ENCODE measurements at regions of chr17 and their contacts with region 1.

Region 1: GRCh38 chr17:39621523-39622379 is 5.0 kb upstream of the PPP1R1B start:
- DNase-seq: peak; percentile 78 to 96 (median 87)
- ATAC-seq: peak; percentile 79
- H3K4me3 ChIP-seq: peak overlapping the region in 1 of 2 experiments; percentile 27
- H3K4me3 Mint-ChIP-seq: peak overlapping the region; percentile 77
- H3K27ac ChIP-seq: peak overlapping the region in 1 of 2 experiments; percentile 17
- H3K27ac Mint-ChIP-seq: peak overlapping the region; percentile 87
- H3K4me1 ChIP-seq: peaks cover 36% of the 10 kb centered on the region
- H3K4me1 Mint-ChIP-seq: peaks cover 23% of the 10 kb centered on the region
- H3K27me3 ChIP-seq: peaks cover 8 to 10% of the 10 kb centered on the region in 2 experiments
- H3K27me3 Mint-ChIP-seq: peaks cover 14% of the 10 kb centered on the region
- CTCF ChIP-seq: peak; percentile 100

Region 2: DNA sequence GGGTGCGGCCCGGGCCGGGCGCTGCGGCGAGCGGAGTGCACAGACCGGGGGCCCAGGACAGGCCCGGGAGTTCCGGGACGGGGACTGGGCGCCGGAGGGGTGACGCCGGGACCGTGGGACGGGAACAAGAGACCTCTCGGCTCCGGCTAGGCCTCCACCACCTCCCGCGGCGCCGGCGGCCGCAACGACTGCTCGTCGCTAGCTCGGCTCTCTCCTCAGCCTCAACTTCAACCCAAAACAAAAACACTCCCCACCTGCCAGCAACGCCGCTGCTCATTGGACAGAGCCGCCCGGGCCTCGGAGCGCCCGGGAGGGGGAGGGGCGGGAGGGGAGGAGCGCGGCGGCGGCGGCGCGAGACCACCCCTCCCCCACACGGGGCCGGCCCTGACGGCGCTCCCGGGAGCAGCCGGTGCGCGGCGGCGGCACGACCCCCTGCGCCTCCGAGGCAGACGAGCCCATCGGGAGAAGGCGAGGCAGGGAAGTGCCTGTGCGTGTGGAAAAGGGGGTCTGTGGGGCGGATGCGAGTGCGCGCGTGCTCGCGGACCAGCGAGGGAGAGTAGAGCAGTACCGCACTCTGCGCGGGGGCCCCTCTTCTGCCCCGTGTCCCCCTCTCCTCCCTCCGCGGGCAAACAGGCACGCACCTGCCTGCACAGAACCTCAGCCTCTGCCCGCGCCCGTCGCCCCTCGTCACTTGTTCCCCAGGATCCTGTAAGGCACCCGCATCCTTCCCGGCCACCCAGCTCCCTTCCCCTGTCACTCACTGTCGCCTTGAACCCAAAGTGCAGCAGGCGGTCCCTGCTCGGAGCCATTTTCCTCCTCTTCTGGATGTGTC is 220.1 kb before region 1 on chr17 and contains the start of gene FBXL20:
- CTCF ChIA-PET with region 1: no interaction called
- POLR2A ChIA-PET with region 1: no interaction called
- intact Hi-C with region 1: loop called in 1 of 2 experiments (anchors 5 kb)
- DNase-seq: peak; percentile 90 to 96 (median 94)
- ATAC-seq: peak; percentile 78
- H3K4me3 ChIP-seq: peak within 1 kb of the TSS; percentile 89 to 96
- H3K4me3 Mint-ChIP-seq: peak within 1 kb of the TSS; percentile 98
- H3K27ac ChIP-seq: peak within 1 kb of the TSS; percentile 78 to 82
- H3K27ac Mint-ChIP-seq: peak within 1 kb of the TSS; percentile 97
- H3K4me1 ChIP-seq: peaks cover 14% of the 10 kb centered on the region
- H3K4me1 Mint-ChIP-seq: peaks cover 39% of the 10 kb centered on the region
- H3K27me3 ChIP-seq: no peaks in the 10 kb centered on the region
- H3K27me3 Mint-ChIP-seq: no peaks in the 10 kb centered on the region
- CTCF ChIP-seq: no peak
- total RNA-seq, gene FBXL20: 12.1 to 14.0 TPM

Region 3: DNA sequence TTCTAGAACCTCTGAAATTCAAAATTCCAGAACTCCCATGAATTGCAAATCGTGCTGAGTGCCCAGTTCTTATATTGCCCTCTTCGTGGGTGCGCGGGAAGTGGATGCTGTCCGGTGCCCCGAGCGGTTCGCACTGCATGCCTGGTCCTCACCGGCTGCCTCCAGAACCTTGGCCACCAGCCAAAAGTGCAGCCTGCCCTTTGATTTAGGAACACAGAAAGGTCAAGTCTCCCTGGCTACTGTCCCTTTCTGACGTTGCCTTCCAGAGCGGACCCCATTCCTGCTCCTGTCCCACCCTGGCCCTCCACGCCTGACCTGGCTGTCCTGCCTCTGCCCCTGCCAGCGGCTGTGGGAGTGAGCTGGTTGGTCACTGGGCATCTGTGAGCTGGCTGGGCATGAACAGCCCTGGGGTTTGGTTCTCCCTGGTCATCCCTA is 23.7 kb before region 1 on chr17:
- CTCF ChIA-PET with region 1: interaction called, 36 read pairs
- POLR2A ChIA-PET with region 1: no interaction called
- intact Hi-C with region 1: no loop called
- DNase-seq: peak in 1 of 9 experiments; percentile 2
- ATAC-seq: no peak
- H3K4me3 ChIP-seq: no peak overlapping the region
- H3K4me3 Mint-ChIP-seq: no peak overlapping the region
- H3K27ac ChIP-seq: no peak overlapping the region
- H3K27ac Mint-ChIP-seq: no peak overlapping the region
- H3K4me1 ChIP-seq: peaks cover 26% of the 10 kb centered on the region
- H3K4me1 Mint-ChIP-seq: peaks cover 22% of the 10 kb centered on the region
- H3K27me3 ChIP-seq: peaks cover 51 to 52% of the 10 kb centered on the region in 2 experiments
- H3K27me3 Mint-ChIP-seq: peaks cover 82% of the 10 kb centered on the region
- CTCF ChIP-seq: no peak

Region 4: DNA sequence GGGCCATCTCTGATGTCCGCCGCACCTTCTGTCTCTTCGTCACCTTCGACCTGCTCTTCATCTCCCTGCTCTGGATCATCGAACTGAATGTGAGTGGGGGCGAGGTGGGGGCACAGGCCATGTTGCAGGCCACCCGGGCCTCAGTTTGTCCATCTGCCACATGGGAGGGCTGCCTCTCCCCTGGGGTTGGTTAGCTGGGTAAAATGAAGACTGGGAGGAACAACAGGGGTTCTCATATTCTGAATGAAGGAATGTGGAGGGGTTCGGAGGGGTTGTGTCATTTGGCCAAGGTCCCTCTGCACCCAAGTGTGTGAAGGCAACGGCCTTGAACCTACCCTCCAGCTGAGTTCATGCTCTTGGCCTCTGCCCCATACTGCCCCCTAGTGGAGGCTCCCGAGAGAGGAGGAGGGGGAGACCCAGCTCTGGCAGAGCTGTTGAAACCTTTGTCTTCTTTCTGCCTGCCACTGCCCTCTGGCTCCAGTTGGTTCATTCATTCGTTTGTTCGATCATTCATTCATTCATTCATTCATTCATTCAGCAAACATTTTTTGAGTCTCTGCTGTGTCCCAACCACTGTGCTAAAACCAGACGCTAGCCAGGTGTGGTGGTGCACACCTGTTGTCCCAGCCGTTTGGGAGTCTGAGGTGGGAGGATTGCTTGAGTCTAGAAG is 32.0 kb after region 1 on chr17:
- CTCF ChIA-PET with region 1: interaction called, 143 read pairs
- POLR2A ChIA-PET with region 1: no interaction called
- intact Hi-C with region 1: loop called (anchors 1 kb)
- DNase-seq: peak; percentile 64 to 88 (median 81)
- ATAC-seq: peak; percentile 82
- H3K4me3 ChIP-seq: no peak overlapping the region
- H3K4me3 Mint-ChIP-seq: no peak overlapping the region
- H3K27ac ChIP-seq: no peak overlapping the region
- H3K27ac Mint-ChIP-seq: no peak overlapping the region
- H3K4me1 ChIP-seq: peaks cover 41% of the 10 kb centered on the region
- H3K4me1 Mint-ChIP-seq: peaks cover 60% of the 10 kb centered on the region
- H3K27me3 ChIP-seq: no peaks in the 10 kb centered on the region
- H3K27me3 Mint-ChIP-seq: no peaks in the 10 kb centered on the region
- CTCF ChIP-seq: peak; percentile 83

Region 5: DNA sequence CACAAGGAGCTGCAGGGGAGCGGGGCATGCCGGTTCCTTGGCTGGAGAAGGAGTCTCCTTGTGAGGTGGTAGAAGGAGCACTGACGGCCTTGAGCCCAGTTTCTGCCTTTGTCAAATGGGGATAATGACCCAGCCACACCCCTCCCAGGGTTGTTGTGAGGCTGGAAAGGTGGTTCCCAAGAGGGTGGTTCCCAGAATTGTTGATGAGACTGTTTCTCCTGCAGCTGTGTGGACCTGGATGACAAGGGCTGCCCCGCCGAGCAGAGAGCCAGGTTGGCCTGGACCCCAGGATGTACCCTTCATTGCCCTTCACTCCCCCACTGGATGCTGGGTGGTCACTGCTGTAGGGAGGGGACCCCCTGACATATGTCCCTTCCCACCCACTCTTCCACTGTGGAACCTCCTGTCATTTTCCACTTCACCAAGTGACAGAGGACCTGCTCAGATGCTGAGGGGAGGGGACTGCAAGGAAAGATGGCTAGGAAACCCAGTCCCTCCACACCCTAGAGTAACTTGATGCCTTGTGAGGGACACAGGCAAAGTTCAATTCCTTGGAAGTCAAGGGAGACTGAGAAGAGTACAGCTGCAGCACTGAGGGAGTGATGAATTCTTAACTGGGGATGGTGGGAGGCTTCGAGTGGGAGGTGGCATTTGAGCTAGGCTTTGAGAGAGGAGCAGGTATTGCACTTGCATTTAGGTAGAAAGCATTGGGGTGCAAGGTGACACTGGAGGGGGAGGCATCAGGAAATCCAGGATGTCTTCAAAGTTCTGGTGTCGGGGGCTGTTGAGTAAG is 98.0 kb after region 1 on chr17:
- CTCF ChIA-PET with region 1: interaction called, 10 read pairs
- POLR2A ChIA-PET with region 1: no interaction called
- intact Hi-C with region 1: no loop called
- DNase-seq: no peak
- ATAC-seq: no peak
- H3K4me3 ChIP-seq: no peak overlapping the region
- H3K4me3 Mint-ChIP-seq: no peak overlapping the region
- H3K27ac ChIP-seq: no peak overlapping the region
- H3K27ac Mint-ChIP-seq: no peak overlapping the region
- H3K4me1 ChIP-seq: no peaks in the 10 kb centered on the region
- H3K4me1 Mint-ChIP-seq: no peaks in the 10 kb centered on the region
- H3K27me3 ChIP-seq: no peaks in the 10 kb centered on the region
- H3K27me3 Mint-ChIP-seq: no peaks in the 10 kb centered on the region
- CTCF ChIP-seq: no peak

Region 6: GRCh38 chr17:39777534-39778365 is 156.0 kb after region 1 on chr17:
- CTCF ChIA-PET with region 1: interaction called, 11 read pairs
- POLR2A ChIA-PET with region 1: interaction called, 4 read pairs
- intact Hi-C with region 1: no loop called
- DNase-seq: peak in 2 of 9 experiments; percentile 54 to 71
- ATAC-seq: peak; percentile 46
- H3K4me3 ChIP-seq: peak overlapping the region; percentile 50 to 64
- H3K4me3 Mint-ChIP-seq: peak overlapping the region; percentile 89
- H3K27ac ChIP-seq: peak overlapping the region; percentile 52 to 84
- H3K27ac Mint-ChIP-seq: peak overlapping the region; percentile 97
- H3K4me1 ChIP-seq: peaks cover 87% of the 10 kb centered on the region
- H3K4me1 Mint-ChIP-seq: peaks cover 85% of the 10 kb centered on the region
- H3K27me3 ChIP-seq: no peaks in the 10 kb centered on the region
- H3K27me3 Mint-ChIP-seq: no peaks in the 10 kb centered on the region
- CTCF ChIP-seq: no peak

Region 7: DNA sequence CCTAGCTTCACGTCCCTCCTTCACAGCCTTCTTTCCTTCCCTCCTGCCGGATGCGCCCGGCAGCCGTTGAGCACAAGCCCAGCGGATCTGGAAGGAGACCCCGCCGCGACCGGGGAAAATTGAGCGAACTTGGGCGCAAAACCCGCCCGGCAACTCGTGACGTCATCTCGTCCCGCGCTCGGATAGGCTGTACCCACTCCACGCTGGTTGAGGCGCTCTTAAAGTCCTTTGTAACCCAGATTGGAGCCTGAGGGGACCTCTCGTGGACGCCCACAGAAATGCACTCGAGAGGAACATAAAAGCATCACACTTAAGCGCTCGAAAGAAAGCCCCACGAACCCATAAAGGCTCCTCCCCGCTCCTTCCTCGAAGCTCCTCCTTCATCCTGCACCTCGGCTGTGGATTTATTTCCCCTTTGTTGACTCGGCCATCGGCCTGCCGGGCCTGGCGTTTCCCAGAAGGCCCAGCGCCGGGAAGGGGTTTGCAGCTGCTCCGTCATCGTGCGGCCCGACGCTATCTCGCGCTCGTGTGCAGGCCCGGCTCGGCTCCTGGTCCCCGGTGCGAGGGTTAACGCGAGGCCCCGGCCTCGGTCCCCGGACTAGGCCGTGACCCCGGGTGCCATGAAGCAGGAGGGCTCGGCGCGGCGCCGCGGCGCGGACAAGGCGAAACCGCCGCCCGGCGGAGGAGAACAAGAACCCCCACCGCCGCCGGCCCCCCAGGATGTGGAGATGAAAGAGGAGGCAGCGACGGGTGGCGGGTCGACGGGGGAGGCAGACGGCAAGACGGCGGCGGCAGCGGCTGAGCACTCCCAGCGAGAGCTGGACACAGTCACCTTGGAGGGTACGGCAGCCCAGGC is 358.8 kb after region 1 on chr17 and contains the start of gene PSMD3:
- CTCF ChIA-PET with region 1: interaction called, 13 read pairs
- POLR2A ChIA-PET with region 1: no interaction called
- intact Hi-C with region 1: loop called (anchors 1 kb)
- DNase-seq: peak; percentile 95 to 100 (median 97)
- ATAC-seq: peak; percentile 94
- H3K4me3 ChIP-seq: peak within 1 kb of the TSS; percentile 67 to 83
- H3K4me3 Mint-ChIP-seq: peak within 1 kb of the TSS; percentile 93
- H3K27ac ChIP-seq: peak within 1 kb of the TSS; percentile 90 to 91
- H3K27ac Mint-ChIP-seq: peak within 1 kb of the TSS; percentile 97
- H3K4me1 ChIP-seq: peaks cover 25% of the 10 kb centered on the region
- H3K4me1 Mint-ChIP-seq: peaks cover 33% of the 10 kb centered on the region
- H3K27me3 ChIP-seq: peaks cover 0 to 3% of the 10 kb centered on the region in 2 experiments
- H3K27me3 Mint-ChIP-seq: no peaks in the 10 kb centered on the region
- CTCF ChIP-seq: peak; percentile 67
- total RNA-seq, gene PSMD3: 66.9 to 68.8 TPM

Region 8: GRCh38 chr17:40139566-40140058 is 517.9 kb after region 1 on chr17:
- CTCF ChIA-PET with region 1: no interaction called
- POLR2A ChIA-PET with region 1: no interaction called
- intact Hi-C with region 1: no loop called
- DNase-seq: peak in 2 of 9 experiments; percentile 3 to 24
- ATAC-seq: peak; percentile 24
- H3K4me3 ChIP-seq: peak overlapping the region; percentile 57 to 71
- H3K4me3 Mint-ChIP-seq: peak overlapping the region; percentile 89
- H3K27ac ChIP-seq: peak overlapping the region; percentile 93 to 94
- H3K27ac Mint-ChIP-seq: peak overlapping the region; percentile 99
- H3K4me1 ChIP-seq: peaks cover 24% of the 10 kb centered on the region
- H3K4me1 Mint-ChIP-seq: peaks cover 42% of the 10 kb centered on the region
- H3K27me3 ChIP-seq: no peaks in the 10 kb centered on the region
- H3K27me3 Mint-ChIP-seq: no peaks in the 10 kb centered on the region
- CTCF ChIP-seq: no peak